AG04449 (cell line): ENCODE measurements at regions of chr11 and their contacts with region 1.

Region 1: GRCh38 chr11:19903620-19904069 is 191.0 kb downstream of the NAV2 start:
- DNase-seq: no peak
- H3K4me3 ChIP-seq: no peak overlapping the region
- CTCF ChIP-seq: peak; percentile 79

Region 2: DNA sequence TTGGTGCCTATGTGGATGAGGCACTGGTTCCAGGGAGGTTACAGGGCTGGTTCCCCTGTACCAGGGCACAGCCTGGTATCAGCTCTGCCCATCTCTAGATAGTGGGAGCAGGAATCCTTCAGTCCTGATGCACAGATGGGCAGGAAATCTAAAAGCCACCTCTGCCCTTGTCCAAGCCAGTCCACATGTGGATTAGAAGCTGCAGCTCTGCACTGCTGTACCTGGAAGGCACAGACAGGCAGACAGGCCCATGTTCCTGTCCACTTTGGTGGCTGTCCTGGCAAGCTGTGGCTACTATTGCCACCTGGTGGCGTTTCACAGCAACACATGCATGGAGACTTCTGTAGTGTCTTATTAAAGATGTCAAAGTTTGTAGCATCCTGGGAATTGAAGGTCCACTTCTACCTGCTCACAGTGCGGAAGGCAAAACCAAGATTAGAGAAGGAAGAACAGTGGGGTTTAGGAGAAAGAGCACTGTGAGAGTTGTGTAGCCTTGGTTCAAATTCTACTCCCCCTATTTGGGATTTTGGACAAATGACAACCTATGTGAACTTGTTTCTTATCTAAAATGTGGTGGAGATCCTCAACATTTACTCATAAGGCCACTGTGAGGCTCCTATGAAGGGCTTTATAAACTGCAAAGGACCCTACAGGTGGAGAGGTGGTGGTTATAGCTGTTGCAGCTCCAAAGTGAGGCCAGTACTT is 160.9 kb before region 1 on chr11:
- CTCF ChIA-PET with region 1: interaction called, 77 read pairs
- POLR2A ChIA-PET with region 1: no interaction called
- DNase-seq: no peak
- H3K4me3 ChIP-seq: no peak overlapping the region
- CTCF ChIP-seq: peak; percentile 78

Region 3: GRCh38 chr11:19827399-19828135 is 76.1 kb before region 1 on chr11:
- CTCF ChIA-PET with region 1: interaction called, 13 read pairs
- POLR2A ChIA-PET with region 1: no interaction called
- DNase-seq: no peak
- H3K4me3 ChIP-seq: no peak overlapping the region
- CTCF ChIP-seq: no peak

Region 4: DNA sequence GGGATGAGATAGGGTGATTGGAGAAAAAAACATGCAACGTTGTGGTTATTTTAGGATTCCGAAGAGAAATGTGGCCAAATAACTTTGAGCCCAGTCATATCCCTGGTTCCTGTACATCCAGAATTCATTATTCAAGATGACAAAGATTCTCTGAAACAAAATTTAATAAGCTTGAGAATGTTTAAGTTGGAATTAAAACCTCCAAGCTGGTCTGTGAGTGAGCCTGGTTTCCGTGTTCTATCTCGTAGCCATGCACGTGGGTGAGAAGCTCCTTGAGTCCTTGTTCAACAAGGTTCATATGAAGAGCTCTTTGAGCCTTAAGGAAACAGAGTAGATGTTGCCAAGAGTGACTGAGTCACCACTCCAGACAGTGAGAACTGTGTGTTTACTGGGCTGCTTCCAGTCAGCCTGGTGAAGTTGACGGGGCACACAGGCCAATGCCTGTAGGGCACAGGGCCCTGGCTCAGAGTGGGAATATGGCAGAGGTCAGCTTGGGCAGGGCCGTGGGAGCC is 15.5 kb after region 1 on chr11:
- CTCF ChIA-PET with region 1: interaction called, 121 read pairs
- POLR2A ChIA-PET with region 1: no interaction called
- DNase-seq: peak; percentile 99
- H3K4me3 ChIP-seq: no peak overlapping the region
- CTCF ChIP-seq: no peak

Region 5: GRCh38 chr11:19951558-19952115 is 48.0 kb after region 1 on chr11:
- CTCF ChIA-PET with region 1: interaction called, 73 read pairs
- POLR2A ChIA-PET with region 1: no interaction called
- DNase-seq: no peak
- H3K4me3 ChIP-seq: no peak overlapping the region
- CTCF ChIP-seq: peak; percentile 30